Heart left ventricle (tissue), 16 donors: ENCODE measurements at regions of chrX and their contacts with region 1.

Region 1: DNA sequence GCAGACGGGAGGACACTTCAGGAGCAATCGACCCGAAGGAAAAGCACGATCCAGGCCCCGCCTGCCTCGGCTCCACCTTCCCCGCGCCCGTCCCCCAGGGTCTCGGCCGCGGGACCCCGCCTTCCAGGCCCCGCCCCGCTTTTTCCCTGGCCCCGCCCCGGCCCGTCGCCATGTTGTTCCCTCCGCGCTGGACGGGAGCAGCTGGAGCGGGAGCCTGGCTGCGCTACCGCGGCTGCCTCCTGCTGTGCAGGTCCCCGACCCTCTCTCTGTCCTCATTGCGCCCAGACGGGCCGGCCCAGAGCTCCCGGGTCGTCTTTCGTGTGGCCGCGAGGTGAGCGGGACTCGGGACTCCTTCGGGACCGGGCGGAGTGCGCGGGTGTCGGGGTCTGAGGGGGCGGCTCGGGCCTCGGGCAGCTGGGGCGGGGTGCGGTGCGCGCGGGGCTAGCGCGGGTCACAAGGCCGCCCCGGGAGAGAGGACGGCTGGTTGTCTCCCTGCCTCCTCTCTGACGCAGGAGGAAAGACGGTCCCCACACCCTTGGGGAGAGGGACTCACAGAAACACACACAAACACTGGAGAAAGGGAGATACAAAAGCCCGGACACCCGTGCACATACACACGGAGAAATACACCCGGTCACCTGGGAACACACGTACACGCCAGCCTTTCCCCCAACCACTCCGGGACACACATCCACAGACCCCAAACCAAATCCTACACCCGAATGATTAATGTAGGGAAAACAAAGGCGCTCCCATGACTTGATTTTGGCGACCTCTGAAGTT is at the start of gene RAB9A:
- DNase-seq: peak; percentile 88 to 91 (median 88)
- ATAC-seq: peak; percentile 91 to 99 (median 98)
- H3K4me3 ChIP-seq: peak within 1 kb of the TSS; percentile 39 to 87 (median 72)
- H3K27ac ChIP-seq: peak within 1 kb of the TSS; percentile 87 to 96 (median 92)
- H3K4me1 ChIP-seq: peaks cover 0 to 39% (median 20%) of the 10 kb centered on the region in 12 donors
- H3K27me3 ChIP-seq: peaks cover 0 to 51% (median 0%) of the 10 kb centered on the region in 9 donors
- CTCF ChIP-seq: no peak
- POLR2A ChIP-seq: peak; percentile 55 to 89
- total RNA-seq, gene RAB9A: 17.4 to 34.2 (median 21.7) TPM

Region 2: GRCh38 chrX:13699183-13699826 is 10.2 kb after region 1 on chrX:
- intact Hi-C with region 1: loop called in 1 of 10 experiments (anchors 1 kb)
- DNase-seq: no peak
- ATAC-seq: peak in 2 of 4 donors; percentile 77 to 84
- H3K4me3 ChIP-seq: no peak overlapping the region
- H3K27ac ChIP-seq: peak overlapping the region in 2 of 12 donors; percentile 10 to 34
- H3K4me1 ChIP-seq: peaks cover 0 to 72% (median 31%) of the 10 kb centered on the region in 12 donors
- H3K27me3 ChIP-seq: peaks cover 0 to 16% (median 0%) of the 10 kb centered on the region in 9 donors
- CTCF ChIP-seq: no peak
- POLR2A ChIP-seq: no peak

Region 3: DNA sequence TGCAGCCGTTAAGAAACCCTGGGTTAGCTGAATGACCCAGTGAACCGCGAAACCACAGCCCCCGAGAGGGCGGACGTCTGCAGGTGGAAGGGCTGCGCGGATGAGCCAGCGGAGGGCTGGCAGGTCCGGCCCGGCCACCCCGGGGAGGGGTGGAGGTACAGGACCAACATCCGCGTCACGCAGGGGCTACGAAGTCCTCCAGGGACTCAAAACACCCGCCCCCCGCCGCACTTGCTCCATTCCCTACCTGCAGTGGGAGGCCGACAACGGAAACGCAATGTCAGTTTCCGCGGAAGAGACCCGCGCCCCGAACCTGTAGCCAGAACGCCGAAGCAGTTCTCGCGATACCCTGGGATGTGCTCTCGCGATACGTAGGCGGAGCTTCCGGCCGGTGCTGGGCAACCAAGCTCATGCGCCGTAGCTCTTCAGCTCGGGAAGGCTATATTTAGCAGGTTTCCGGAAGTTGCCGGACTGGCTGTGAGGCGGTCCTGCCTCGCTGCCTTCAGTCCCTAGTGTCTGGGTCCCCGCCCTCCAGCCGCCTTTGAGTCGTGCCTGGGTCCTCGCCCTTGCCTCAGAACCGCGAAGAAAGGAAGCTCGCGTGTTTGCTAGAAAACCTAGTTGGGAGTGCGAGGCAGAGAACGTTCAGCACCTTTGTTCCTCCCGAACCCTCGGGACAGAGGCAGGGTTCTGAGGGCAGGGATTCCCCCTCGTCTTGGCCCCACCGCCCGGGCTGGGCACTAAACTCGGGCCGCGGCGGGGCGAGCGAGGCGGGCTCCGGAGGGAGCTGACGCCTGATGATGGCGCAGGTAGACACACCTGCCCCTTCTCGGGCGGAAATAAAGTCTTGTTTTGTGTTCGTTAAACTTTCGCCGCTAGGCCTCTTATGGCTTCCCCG is 45.4 kb after region 1 on chrX and contains the starts of genes OFD1 and TRAPPC2:
- intact Hi-C with region 1: loop called in 3 of 10 experiments (anchors 2 to 5 kb)
- DNase-seq: peak; percentile 89 to 94 (median 91)
- ATAC-seq: peak; percentile 99 to 100 (median 100)
- H3K4me3 ChIP-seq: peak within 1 kb of the TSS; percentile 47 to 91 (median 80)
- H3K27ac ChIP-seq: peak within 1 kb of the TSS in 11 of 12 donors; percentile 74 to 94 (median 87)
- H3K4me1 ChIP-seq: peaks cover 0 to 38% (median 7%) of the 10 kb centered on the region in 12 donors
- H3K27me3 ChIP-seq: peaks cover 0 to 22% (median 0%) of the 10 kb centered on the region in 9 donors
- CTCF ChIP-seq: no peak
- POLR2A ChIP-seq: peak in 1 of 2 donors; percentile 90
- total RNA-seq, gene OFD1: 5.6 to 12.9 (median 8.9) TPM
- total RNA-seq, gene TRAPPC2: 4.4 to 11.1 (median 5.3) TPM

Region 4: GRCh38 chrX:13764765-13765164 is 75.6 kb after region 1 on chrX:
- intact Hi-C with region 1: no loop called
- DNase-seq: peak in 3 of 5 donors; percentile 18 to 56 (median 28)
- ATAC-seq: peak in 3 of 4 donors; percentile 29 to 62 (median 42)
- H3K4me3 ChIP-seq: no peak overlapping the region
- H3K27ac ChIP-seq: peak overlapping the region; percentile 16 to 64 (median 51)
- H3K4me1 ChIP-seq: peaks cover 0 to 31% (median 8%) of the 10 kb centered on the region in 12 donors
- H3K27me3 ChIP-seq: peaks cover 0 to 6% (median 0%) of the 10 kb centered on the region in 9 donors
- CTCF ChIP-seq: peak in 11 of 12 donors; percentile 8 to 46 (median 21)
- POLR2A ChIP-seq: no peak

Region 5: DNA sequence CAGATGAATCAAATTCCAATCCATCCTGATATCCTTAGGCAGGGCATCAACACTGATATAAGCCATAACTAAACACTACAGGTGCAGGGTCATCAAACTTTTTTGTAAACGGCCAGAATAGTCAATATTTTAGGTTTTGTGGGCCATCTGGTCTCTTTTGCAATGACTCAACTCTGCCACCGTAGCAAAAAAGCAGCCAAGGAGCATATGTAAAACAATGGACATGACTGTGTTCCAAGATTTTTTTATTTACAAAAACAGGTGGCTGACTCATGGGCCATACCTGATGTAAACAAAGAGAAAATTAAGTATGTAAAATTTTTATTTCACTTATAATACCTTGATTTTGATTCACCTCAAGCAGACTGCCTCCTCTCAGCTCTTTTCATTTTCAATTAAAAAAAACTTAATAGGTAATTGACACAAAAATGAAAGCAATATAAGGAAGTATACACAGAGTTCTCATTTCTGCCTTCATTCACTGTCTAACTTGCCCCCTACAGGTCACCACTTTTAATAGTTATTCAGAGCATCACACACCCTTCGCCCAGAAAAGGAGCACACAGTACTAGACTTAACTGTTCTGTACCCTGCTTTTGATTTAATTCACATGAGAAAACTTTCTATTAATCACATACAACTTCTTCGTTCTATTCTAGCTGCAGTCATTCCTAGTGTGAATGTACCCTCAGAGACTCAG is 163.0 kb after region 1 on chrX:
- intact Hi-C with region 1: no loop called
- DNase-seq: no peak
- ATAC-seq: no peak
- H3K4me3 ChIP-seq: no peak overlapping the region
- H3K27ac ChIP-seq: no peak overlapping the region
- H3K4me1 ChIP-seq: no peaks in the 10 kb centered on the region
- H3K27me3 ChIP-seq: peaks cover 0 to 12% (median 0%) of the 10 kb centered on the region in 9 donors
- CTCF ChIP-seq: no peak
- POLR2A ChIP-seq: no peak